AG04449 (cell line): ENCODE measurements at regions of chr16 and their contacts with region 1.

Region 1: DNA sequence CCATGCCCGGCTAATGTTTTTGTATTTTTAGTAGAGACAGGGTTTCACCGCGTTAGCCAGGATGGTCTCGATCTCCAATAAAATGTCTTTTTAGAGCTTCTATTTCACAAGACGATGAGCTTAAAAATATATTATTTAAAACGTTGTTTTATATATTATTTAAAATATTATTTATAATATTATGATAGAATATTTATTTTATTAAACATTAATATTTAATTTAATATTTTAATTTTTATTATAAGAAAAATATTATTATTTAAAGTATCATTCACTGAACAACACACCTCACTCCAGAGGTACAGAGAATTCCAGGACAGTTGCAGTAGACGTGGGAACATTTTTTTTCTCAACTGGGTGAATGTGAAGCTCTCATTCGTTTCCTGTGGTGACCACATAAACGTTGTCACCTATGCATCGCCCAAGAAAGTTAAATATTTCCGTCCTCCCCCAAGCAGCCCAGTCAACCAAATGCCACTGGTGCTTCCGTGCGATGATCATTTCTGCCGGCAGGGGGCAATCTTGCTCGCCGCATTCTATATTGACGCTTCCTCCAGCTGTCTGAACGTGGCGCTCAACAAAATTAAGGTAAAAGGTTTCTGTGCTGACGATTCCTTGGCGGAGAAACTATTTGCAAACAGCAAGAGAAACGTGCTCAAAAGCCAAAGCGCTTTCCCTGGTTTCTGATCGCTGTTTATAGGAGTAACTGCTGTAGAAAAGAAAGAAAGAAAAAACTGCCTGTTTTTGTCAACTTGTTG is 41.7 kb upstream of the PRSS54 start:
- DNase-seq: peak; percentile 7
- H3K4me3 ChIP-seq: peak overlapping the region; percentile 29; the same call in 1 of the 2 replicates
- CTCF ChIP-seq: peak; percentile 88

Region 2: DNA sequence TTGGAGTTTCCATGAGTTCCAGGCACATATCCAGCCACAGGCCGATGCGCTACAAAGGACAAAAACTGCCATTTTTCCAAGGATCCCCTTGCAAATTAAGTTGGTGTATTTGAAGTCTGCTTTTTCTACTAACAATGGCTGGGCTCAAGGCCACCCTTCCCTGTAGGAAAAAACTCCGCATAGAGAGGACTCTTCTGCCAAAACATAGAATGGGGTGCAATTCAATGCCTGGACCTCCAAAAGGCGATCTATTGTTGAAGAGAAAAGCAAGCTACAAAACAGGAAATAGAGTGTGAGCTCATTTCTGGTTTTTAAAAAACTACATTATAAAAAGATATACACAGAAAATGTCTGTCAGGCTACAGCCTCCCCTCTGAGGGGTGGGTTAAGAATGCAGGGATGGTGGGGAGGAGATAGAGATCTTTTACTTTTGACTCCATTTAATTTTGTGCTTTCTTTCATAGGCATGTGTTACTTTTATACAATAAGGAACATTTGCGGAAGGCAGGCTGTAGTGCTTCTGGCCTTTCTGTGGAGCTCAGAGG is 18.8 kb before region 1 on chr16:
- CTCF ChIA-PET with region 1: interaction called, 47 read pairs
- POLR2A ChIA-PET with region 1: no interaction called
- DNase-seq: no peak
- H3K4me3 ChIP-seq: no peak overlapping the region
- CTCF ChIP-seq: no peak

Region 3: GRCh38 chr16:58392215-58393137 is 56.0 kb after region 1 on chr16 and contains the start of gene GINS3:
- CTCF ChIA-PET with region 1: interaction called, 14 read pairs
- POLR2A ChIA-PET with region 1: no interaction called
- DNase-seq: peak; percentile 55
- H3K4me3 ChIP-seq: peak within 1 kb of the TSS; percentile 93
- CTCF ChIP-seq: no peak

Region 4: GRCh38 chr16:58487566-58488351 is 151.2 kb after region 1 on chr16:
- CTCF ChIA-PET with region 1: interaction called, 262 read pairs
- POLR2A ChIA-PET with region 1: no interaction called
- DNase-seq: peak; percentile 1
- H3K4me3 ChIP-seq: peak overlapping the region; percentile 20; the same call in 1 of the 2 replicates
- CTCF ChIP-seq: peak; percentile 97

Region 5: DNA sequence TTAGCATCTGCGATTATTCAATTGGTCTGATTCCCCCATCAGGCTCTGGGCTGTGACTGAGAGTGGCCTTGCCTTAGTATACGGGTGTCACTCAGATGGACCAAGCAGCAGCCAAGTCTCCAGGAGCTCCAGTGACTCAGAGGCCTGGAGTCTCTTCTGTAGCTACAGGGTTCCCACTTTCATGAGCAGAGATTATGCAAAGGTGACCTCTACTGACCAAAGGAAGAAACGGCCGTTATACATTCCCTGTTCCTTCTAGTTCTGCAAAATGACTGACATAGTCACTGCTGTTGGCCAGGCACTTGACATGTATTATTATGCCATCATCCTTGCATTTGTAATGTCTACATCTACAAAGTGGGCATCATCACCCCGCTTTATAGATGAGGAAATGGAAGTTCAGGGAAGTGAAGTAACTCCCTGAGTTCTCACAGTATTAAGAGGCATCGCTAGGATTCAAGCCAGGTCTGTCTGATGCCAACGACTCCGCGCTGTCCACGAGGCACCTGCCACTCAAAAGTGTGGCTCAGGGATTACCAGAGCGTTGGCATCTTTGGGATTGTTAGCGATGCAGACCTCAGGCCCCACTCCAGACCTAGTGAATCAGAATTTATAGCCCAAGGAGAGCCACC is 324.8 kb after region 1 on chr16:
- CTCF ChIA-PET with region 1: interaction called, 27 read pairs
- POLR2A ChIA-PET with region 1: no interaction called
- DNase-seq: peak; percentile 56
- H3K4me3 ChIP-seq: no peak overlapping the region
- CTCF ChIP-seq: peak; percentile 67